ENCODE measurements at regions of chr12 and their contacts with region 1.

Region 1: DNA sequence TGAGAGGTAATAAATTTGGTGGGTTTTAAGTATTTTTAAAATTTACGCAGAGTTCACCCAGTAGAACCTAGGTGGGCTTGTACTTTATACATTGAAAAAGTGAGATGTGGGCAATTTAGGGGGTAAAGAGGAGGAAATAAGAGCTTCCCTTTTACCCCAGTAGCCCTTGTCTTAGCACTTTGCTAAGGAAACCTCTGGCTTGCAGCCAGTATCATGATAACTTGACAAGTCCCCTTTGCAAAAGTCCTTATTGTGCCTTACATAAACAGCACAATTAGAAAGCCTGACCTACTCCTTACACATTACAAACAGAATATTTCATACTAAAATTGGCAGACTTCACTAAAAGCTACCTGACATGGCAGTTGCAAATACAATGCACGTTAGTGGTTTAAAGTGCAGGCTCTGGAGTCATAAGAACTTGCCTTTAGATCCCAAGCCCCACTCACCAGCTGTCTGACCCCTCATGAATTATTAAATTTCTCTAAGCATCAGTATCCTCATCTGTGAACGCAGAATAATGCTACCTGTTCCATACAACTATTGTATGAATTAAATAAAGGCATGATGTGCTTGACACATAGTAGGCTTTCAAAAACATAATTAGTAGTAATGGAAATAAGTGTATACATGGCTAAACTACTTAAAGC is 53.2 kb upstream of the NELL2 start:
- DNase-seq: no peak
- H3K4me3 ChIP-seq: no peak overlapping the region
- CTCF ChIP-seq: no peak
- POLR2A ChIP-seq: no peak

Region 2: DNA sequence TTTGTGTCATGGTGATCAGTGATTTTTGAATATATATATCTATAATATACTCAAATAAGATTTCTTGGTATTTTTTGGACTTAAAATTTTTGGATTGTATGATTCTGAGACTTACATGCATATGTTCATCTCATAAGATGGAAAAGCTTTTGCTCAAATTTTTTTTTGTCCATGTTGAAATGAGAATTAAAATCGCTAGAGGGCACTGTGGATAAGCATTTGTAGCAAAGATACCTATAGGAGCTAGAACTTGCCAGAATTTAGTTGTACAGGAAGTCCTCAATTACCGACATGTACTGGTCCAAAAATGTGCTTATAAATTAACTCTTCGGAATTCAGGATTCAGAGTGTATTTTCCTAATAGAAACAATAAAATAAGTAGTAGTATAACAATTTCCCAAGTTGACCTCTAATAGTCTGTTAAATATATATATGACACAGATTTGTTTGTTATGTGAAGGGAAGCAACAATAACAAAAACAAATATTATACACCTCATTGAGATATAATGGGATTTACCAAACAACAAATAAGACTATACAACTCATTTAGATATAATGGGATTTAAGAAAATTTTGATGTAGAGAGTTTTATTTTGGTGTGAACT is 913.9 kb before region 1 on chr12:
- intact Hi-C with region 1: loop called (anchors 10 kb)
- DNase-seq: no peak
- H3K4me3 ChIP-seq: no peak overlapping the region
- CTCF ChIP-seq: no peak
- POLR2A ChIP-seq: no peak

Region 3: GRCh38 chr12:44999355-44999754 is 70.0 kb after region 1 on chr12:
- intact Hi-C with region 1: no loop called
- DNase-seq: no peak
- H3K4me3 ChIP-seq: no peak overlapping the region
- CTCF ChIP-seq: no peak
- POLR2A ChIP-seq: no peak

Region 4: GRCh38 chr12:46217541-46218321 is 1288.4 kb after region 1 on chr12:
- intact Hi-C with region 1: no loop called
- DNase-seq: peak in 1 of 2 donors; percentile 46
- H3K4me3 ChIP-seq: no peak overlapping the region
- CTCF ChIP-seq: no peak
- POLR2A ChIP-seq: no peak